ENCODE measurements at regions of chr4 and their contacts with region 1.

Region 1: DNA sequence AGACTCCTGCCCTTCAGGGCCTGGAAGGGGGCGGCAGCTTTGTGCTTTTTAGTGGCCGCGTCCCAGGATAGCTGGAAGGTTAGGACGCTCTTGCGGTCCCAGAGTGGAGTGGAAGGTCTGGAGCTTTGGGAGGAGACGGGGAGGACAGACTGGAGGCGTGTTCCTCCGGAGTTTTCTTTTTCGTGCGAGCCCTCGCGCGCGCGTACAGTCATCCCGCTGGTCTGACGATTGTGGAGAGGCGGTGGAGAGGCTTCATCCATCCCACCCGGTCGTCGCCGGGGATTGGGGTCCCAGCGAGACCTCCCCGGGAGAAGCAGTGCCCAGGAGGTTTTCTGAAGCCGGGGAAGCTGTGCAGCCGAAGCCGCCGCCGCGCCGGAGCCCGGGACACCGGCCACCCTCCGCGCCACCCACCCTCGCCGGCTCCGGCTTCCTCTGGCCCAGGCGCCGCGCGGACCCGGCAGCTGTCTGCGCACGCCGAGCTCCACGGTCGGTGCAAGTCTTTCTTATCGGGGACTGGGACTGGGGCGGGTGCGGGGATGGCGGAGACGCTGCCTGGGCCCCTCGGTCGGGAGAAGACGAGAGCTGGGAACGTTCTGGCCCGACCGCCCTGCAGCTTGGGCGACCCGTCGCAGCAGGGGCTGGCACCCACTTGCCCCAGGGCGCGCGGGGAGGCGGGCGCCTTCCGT is at the start of gene EDNRA:
- DNase-seq: peak; percentile 68
- ATAC-seq: peak; percentile 85
- H3K4me3 ChIP-seq: peak within 1 kb of the TSS; percentile 69
- H3K27ac ChIP-seq: peak within 1 kb of the TSS; percentile 70
- H3K4me1 ChIP-seq: peaks cover 9% of the 10 kb centered on the region
- H3K27me3 ChIP-seq: no peaks in the 10 kb centered on the region
- CTCF ChIP-seq: no peak
- POLR2A ChIP-seq: peak; percentile 72
- RAD21 ChIP-seq: no peak
- total RNA-seq, gene EDNRA: 6.5 and 7.8 TPM in 2 replicates

Region 2: GRCh38 chr4:147111033-147111367 is 370.0 kb before region 1 on chr4:
- CTCF ChIA-PET with region 1: no interaction called
- POLR2A ChIA-PET with region 1: no interaction called
- dilution Hi-C with region 1: no loop called
- in situ Hi-C with region 1: no loop called
- intact Hi-C with region 1: loop called (anchors 5 kb)
- DNase-seq: peak; percentile 47
- ATAC-seq: peak; percentile 82
- H3K4me3 ChIP-seq: no peak overlapping the region
- H3K27ac ChIP-seq: no peak overlapping the region
- H3K4me1 ChIP-seq: no peaks in the 10 kb centered on the region
- H3K27me3 ChIP-seq: no peaks in the 10 kb centered on the region
- CTCF ChIP-seq: peak; percentile 58
- POLR2A ChIP-seq: no peak
- RAD21 ChIP-seq: peak; percentile 66

Region 3: GRCh38 chr4:147160908-147161513 is 320.0 kb before region 1 on chr4:
- CTCF ChIA-PET with region 1: interaction called, 3 read pairs
- POLR2A ChIA-PET with region 1: interaction called, 4 read pairs
- dilution Hi-C with region 1: no loop called
- in situ Hi-C with region 1: no loop called
- intact Hi-C with region 1: loop called (anchors 1 kb)
- DNase-seq: peak; percentile 71
- ATAC-seq: peak; percentile 84
- H3K4me3 ChIP-seq: no peak overlapping the region
- H3K27ac ChIP-seq: no peak overlapping the region
- H3K4me1 ChIP-seq: 0 out of 2 replicates have a peak, but pooled peaks cover 2% of the 10 kb centered on the region
- H3K27me3 ChIP-seq: no peaks in the 10 kb centered on the region
- CTCF ChIP-seq: peak; percentile 78
- POLR2A ChIP-seq: no peak
- RAD21 ChIP-seq: peak; percentile 84

Region 4: GRCh38 chr4:147318586-147318985 is 162.4 kb before region 1 on chr4:
- CTCF ChIA-PET with region 1: no interaction called
- POLR2A ChIA-PET with region 1: interaction called, 3 read pairs
- dilution Hi-C with region 1: no loop called
- in situ Hi-C with region 1: no loop called
- intact Hi-C with region 1: loop called (anchors 5 kb)
- DNase-seq: peak; percentile 68
- ATAC-seq: peak; percentile 90
- H3K4me3 ChIP-seq: no peak overlapping the region
- H3K27ac ChIP-seq: peak overlapping the region; percentile 59; the same call in 1 of the 2 replicates
- H3K4me1 ChIP-seq: peaks cover 2% of the 10 kb centered on the region; the same call in 1 of the 2 replicates
- H3K27me3 ChIP-seq: no peaks in the 10 kb centered on the region
- CTCF ChIP-seq: no peak
- POLR2A ChIP-seq: no peak
- RAD21 ChIP-seq: no peak

Region 5: DNA sequence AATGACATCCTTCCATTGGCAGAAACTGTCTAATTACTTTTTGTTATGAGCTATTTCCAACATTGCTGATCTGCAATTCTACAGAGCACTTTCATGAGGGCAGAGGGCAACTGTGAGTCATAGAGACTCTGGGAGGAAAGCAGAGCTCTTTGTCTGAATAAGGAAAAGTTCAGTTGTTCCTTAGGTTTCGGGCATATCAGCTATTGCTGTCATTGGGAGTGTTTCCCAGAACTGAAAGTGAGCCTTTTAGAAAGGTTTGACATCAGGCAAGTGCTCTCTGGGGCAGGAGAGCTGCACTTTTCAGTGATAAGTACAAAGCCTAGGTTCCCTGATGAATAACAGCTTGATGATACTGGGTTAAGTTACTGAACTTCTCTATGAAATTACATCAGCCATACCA is 119.3 kb before region 1 on chr4:
- CTCF ChIA-PET with region 1: no interaction called
- POLR2A ChIA-PET with region 1: no interaction called
- dilution Hi-C with region 1: no loop called
- in situ Hi-C with region 1: no loop called
- intact Hi-C with region 1: loop called (anchors 5 kb)
- DNase-seq: peak; percentile 92
- ATAC-seq: peak; percentile 87
- H3K4me3 ChIP-seq: no peak overlapping the region
- H3K27ac ChIP-seq: peak overlapping the region; percentile 82
- H3K4me1 ChIP-seq: peaks cover 28% of the 10 kb centered on the region
- H3K27me3 ChIP-seq: no peaks in the 10 kb centered on the region
- CTCF ChIP-seq: no peak
- POLR2A ChIP-seq: no peak
- RAD21 ChIP-seq: no peak

Region 6: DNA sequence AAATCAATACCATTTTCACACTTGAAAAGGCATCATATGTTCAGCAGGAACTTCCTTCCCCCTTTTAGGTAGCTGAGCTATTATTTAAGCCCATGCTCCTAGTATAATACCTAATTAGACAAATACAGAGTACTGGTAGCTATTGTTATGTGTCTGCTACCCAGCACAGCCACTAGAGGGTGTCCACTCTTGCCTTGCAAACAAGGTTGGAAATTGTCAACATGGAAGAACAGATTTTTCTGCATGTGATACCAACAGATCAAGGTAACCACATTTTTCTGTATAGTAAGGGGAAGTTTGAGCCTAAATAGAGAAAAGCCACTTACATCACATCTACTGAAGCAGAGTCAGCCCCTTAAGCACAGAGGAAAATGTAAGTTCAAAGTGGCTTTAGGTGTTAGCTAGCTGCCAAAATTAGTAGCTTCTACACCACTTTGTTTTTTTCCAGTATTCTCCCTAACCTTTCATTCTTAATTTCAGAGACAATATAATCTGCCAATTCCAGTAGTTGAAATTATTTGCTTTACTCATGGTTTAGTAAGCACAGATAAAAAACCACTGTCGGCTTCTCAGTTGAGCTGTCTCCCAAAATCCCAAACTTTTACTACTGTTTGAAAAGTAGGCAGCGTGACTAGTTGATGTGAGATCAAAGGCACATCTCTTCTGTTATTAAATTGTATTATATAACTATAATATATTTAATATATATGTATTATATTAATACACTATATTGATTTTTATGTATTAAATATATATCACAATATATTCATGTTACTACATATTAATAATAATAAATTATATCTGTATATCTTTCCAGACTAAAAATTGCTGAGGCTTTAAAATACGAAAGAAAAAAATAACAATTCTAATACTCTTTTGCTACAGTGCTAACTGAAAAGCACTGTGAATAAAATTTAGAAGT is 38.1 kb after region 1 on chr4:
- CTCF ChIA-PET with region 1: interaction called, 4 read pairs
- POLR2A ChIA-PET with region 1: no interaction called
- dilution Hi-C with region 1: no loop called
- in situ Hi-C with region 1: no loop called
- intact Hi-C with region 1: loop called (anchors 2 kb)
- DNase-seq: peak; percentile 86
- ATAC-seq: peak; percentile 89
- H3K4me3 ChIP-seq: no peak overlapping the region
- H3K27ac ChIP-seq: no peak overlapping the region
- H3K4me1 ChIP-seq: no peaks in the 10 kb centered on the region; the same call in 1 of the 2 replicates
- H3K27me3 ChIP-seq: no peaks in the 10 kb centered on the region
- CTCF ChIP-seq: peak; percentile 85
- POLR2A ChIP-seq: no peak
- RAD21 ChIP-seq: peak; percentile 88